ENCODE measurements at regions of chr6 and their contacts with region 1.

Region 1: DNA sequence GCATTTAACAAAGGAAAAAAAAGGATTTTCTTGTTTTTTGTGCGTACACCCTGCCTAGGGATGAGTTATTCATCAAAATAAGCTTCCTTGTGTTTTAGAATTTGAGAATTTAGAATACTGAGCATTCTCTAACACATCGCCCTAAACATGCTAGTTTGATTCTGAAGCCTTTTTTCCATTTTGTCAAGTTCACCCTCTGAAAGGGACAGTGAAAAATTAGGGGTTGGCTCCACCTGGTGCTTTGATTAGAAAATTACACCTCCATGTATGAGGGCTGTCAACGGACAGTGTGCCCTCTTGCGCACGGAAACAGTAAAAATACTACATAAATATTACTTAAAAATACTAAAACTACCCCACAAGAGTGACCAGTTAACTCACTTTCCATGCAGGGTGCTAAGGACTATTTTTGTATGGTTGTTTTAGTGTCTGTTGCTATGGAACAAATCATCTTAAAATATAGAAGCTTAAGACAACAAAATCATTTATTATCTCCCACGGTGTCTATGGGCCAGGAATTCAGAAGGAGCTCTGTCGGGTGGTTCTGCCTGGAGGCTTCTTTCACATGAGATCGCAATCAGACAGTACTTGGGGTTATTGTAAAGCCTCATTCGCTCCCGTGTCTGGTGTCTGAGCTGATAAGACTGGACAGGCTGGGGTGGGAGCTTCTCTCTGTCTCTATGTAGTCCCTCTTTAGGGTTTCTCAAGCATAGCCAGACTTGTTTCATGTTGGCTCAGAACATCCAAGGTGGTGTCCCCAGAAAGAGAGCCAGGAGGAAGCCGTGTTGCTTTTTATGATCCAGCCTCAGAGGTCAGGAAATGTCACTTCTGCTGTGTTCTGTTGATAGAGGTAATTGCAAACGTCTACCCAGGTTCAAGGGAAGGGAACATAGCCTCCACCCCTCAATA is 41.1 kb upstream of the TMEM170B start:
- DNase-seq: peak; percentile 88
- ATAC-seq: peak; percentile 88
- H3K4me3 ChIP-seq: no peak overlapping the region
- H3K4me3 Mint-ChIP-seq: peak overlapping the region; percentile 40
- H3K27ac ChIP-seq: peak overlapping the region in 1 of 2 donors; percentile 57
- H3K27ac Mint-ChIP-seq: peak overlapping the region; percentile 64
- H3K4me1 ChIP-seq: peaks cover 48 to 52% of the 10 kb centered on the region in 2 donors
- H3K4me1 Mint-ChIP-seq: peaks cover 32% of the 10 kb centered on the region
- H3K27me3 ChIP-seq: no peaks in the 10 kb centered on the region
- H3K27me3 Mint-ChIP-seq: no peaks in the 10 kb centered on the region
- CTCF ChIP-seq: peak; percentile 98

Region 2: GRCh38 chr6:11144393-11144851 is 352.0 kb before region 1 on chr6:
- CTCF ChIA-PET with region 1: interaction called, 156 read pairs
- POLR2A ChIA-PET with region 1: interaction called, 3 read pairs
- intact Hi-C with region 1: loop called (anchors 1 kb)
- DNase-seq: peak; percentile 77
- ATAC-seq: peak; percentile 80
- H3K4me3 ChIP-seq: no peak overlapping the region
- H3K4me3 Mint-ChIP-seq: no peak overlapping the region
- H3K27ac ChIP-seq: no peak overlapping the region
- H3K27ac Mint-ChIP-seq: no peak overlapping the region
- H3K4me1 ChIP-seq: peaks cover 0 to 5% of the 10 kb centered on the region in 2 donors
- H3K4me1 Mint-ChIP-seq: peaks cover 7% of the 10 kb centered on the region
- H3K27me3 ChIP-seq: no peaks in the 10 kb centered on the region
- H3K27me3 Mint-ChIP-seq: no peaks in the 10 kb centered on the region
- CTCF ChIP-seq: peak; percentile 94

Region 3: GRCh38 chr6:11198663-11199603 is 297.5 kb before region 1 on chr6:
- CTCF ChIA-PET with region 1: interaction called, 11 read pairs
- POLR2A ChIA-PET with region 1: no interaction called
- intact Hi-C with region 1: no loop called
- DNase-seq: peak; percentile 32
- ATAC-seq: no peak
- H3K4me3 ChIP-seq: no peak overlapping the region
- H3K4me3 Mint-ChIP-seq: no peak overlapping the region
- H3K27ac ChIP-seq: peak overlapping the region; percentile 11 to 69
- H3K27ac Mint-ChIP-seq: peak overlapping the region; percentile 78
- H3K4me1 ChIP-seq: peaks cover 0 to 8% of the 10 kb centered on the region in 2 donors
- H3K4me1 Mint-ChIP-seq: peaks cover 21% of the 10 kb centered on the region
- H3K27me3 ChIP-seq: no peaks in the 10 kb centered on the region
- H3K27me3 Mint-ChIP-seq: no peaks in the 10 kb centered on the region
- CTCF ChIP-seq: no peak

Region 4: GRCh38 chr6:11330413-11330760 is 166.0 kb before region 1 on chr6:
- CTCF ChIA-PET with region 1: interaction called, 19 read pairs
- POLR2A ChIA-PET with region 1: no interaction called
- intact Hi-C with region 1: loop called (anchors 5 kb)
- DNase-seq: no peak
- ATAC-seq: no peak
- H3K4me3 ChIP-seq: no peak overlapping the region
- H3K4me3 Mint-ChIP-seq: peak overlapping the region; percentile 38
- H3K27ac ChIP-seq: peak overlapping the region; percentile 33 to 78
- H3K27ac Mint-ChIP-seq: peak overlapping the region; percentile 76
- H3K4me1 ChIP-seq: peaks cover 53 to 54% of the 10 kb centered on the region in 2 donors
- H3K4me1 Mint-ChIP-seq: peaks cover 71% of the 10 kb centered on the region
- H3K27me3 ChIP-seq: no peaks in the 10 kb centered on the region
- H3K27me3 Mint-ChIP-seq: no peaks in the 10 kb centered on the region
- CTCF ChIP-seq: no peak

Region 5: DNA sequence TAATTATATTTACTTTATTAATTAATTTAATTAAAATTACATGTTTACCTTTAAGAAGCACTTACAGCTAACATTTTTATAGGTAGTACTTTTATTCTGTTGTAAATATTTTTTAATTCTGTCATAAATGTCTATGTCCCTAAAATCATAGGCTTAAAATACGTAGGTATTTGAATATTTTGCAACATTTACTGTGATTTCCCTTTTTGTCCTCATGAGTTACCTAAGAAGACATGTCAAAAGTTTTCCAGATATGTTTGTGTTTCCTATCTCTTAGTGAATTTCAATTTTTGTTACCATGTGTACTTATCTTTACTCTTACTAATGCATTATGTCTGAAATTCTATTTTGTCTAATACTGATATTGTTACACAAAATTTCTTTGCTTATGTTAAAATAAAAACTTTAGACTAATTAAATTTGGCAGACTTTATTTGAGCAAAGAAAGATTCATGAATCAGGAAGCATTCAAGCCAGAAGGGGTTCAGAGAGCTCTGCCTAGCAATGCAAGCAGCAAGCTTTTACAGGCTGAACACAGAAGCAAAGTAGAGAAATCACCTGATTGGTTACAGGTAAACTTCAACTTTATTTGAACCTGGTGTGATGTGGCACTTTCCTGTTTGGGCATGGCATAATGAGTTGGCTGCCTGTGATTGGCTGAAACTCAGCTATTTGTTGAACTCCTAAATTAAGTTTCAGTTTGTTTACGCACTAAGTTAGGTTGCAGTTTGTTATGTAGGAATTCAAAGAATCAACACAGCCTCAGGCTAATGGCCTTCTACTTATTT is 82.0 kb before region 1 on chr6:
- CTCF ChIA-PET with region 1: interaction called, 15 read pairs
- POLR2A ChIA-PET with region 1: no interaction called
- intact Hi-C with region 1: no loop called
- DNase-seq: peak; percentile 46
- ATAC-seq: peak; percentile 64
- H3K4me3 ChIP-seq: peak overlapping the region in 1 of 5 experiments; percentile 3
- H3K4me3 Mint-ChIP-seq: peak overlapping the region; percentile 39
- H3K27ac ChIP-seq: no peak overlapping the region
- H3K27ac Mint-ChIP-seq: peak overlapping the region; percentile 37
- H3K4me1 ChIP-seq: peaks cover 19 to 30% of the 10 kb centered on the region in 2 donors
- H3K4me1 Mint-ChIP-seq: peaks cover 33% of the 10 kb centered on the region
- H3K27me3 ChIP-seq: no peaks in the 10 kb centered on the region
- H3K27me3 Mint-ChIP-seq: no peaks in the 10 kb centered on the region
- CTCF ChIP-seq: no peak

Region 6: DNA sequence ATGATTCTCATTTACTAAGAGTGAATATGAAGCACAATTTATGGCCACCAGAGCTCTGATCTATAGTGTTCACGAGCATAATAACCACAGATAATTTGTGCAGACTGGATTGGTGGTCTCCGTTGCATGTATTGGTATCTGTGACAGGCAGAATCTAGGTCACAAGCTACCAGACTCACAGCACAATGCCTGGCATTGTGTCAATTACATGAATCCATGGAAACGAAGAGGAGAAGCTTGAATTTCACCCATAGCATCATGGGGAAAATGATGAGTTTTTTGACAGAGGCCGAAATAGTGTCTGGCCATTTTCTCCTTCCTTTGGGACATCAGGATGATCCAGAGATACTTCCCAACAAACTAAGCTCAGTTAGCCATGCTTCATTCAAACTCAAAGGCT is 11.1 kb before region 1 on chr6:
- CTCF ChIA-PET with region 1: interaction called, 11 read pairs
- POLR2A ChIA-PET with region 1: no interaction called
- intact Hi-C with region 1: no loop called
- DNase-seq: no peak
- ATAC-seq: no peak
- H3K4me3 ChIP-seq: no peak overlapping the region
- H3K4me3 Mint-ChIP-seq: no peak overlapping the region
- H3K27ac ChIP-seq: no peak overlapping the region
- H3K27ac Mint-ChIP-seq: no peak overlapping the region
- H3K4me1 ChIP-seq: no peaks in the 10 kb centered on the region
- H3K4me1 Mint-ChIP-seq: no peaks in the 10 kb centered on the region
- H3K27me3 ChIP-seq: no peaks in the 10 kb centered on the region
- H3K27me3 Mint-ChIP-seq: no peaks in the 10 kb centered on the region
- CTCF ChIP-seq: no peak

Region 7: DNA sequence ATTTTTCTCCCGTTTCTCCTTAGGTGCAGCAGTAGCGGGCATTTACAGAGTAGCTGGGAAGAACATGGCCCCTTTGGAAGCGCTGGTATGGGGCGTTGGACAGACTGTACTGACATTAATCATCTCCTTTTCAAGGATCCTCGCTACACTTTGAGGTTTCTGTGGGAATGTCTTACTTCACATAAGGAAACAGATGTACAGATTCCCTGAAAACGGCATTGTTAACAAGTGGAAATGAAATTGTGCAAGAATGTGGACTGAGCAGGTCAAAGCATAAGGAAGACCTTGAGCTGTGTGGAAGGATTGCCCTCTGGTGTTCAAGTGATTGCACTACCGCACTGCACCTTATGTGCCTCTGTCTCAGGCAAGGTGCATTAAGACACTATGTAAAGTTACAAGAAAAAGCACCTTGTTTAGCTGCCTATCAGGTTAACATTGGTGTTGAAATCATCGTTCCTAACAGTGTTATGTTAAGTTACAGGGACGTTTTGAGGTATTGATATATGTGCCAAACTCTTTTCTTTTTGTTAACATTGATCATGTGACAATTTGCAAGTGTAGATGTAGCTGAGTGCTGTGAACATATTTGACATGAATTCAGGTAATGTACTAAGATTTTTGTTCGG is 79.1 kb after region 1 on chr6:
- CTCF ChIA-PET with region 1: interaction called, 30 read pairs
- POLR2A ChIA-PET with region 1: no interaction called
- intact Hi-C with region 1: loop called (anchors 1 kb)
- DNase-seq: peak; percentile 74
- ATAC-seq: peak; percentile 85
- H3K4me3 ChIP-seq: no peak overlapping the region
- H3K4me3 Mint-ChIP-seq: no peak overlapping the region
- H3K27ac ChIP-seq: no peak overlapping the region
- H3K27ac Mint-ChIP-seq: no peak overlapping the region
- H3K4me1 ChIP-seq: no peaks in the 10 kb centered on the region
- H3K4me1 Mint-ChIP-seq: peaks cover 3% of the 10 kb centered on the region
- H3K27me3 ChIP-seq: no peaks in the 10 kb centered on the region
- H3K27me3 Mint-ChIP-seq: no peaks in the 10 kb centered on the region
- CTCF ChIP-seq: peak; percentile 93

Region 8: GRCh38 chr6:11711003-11711983 is 214.9 kb after region 1 on chr6:
- CTCF ChIA-PET with region 1: no interaction called
- POLR2A ChIA-PET with region 1: no interaction called
- intact Hi-C with region 1: no loop called
- DNase-seq: no peak
- ATAC-seq: no peak
- H3K4me3 ChIP-seq: no peak overlapping the region
- H3K4me3 Mint-ChIP-seq: no peak overlapping the region
- H3K27ac ChIP-seq: no peak overlapping the region
- H3K27ac Mint-ChIP-seq: no peak overlapping the region
- H3K4me1 ChIP-seq: peaks cover 8 to 21% of the 10 kb centered on the region in 2 donors
- H3K4me1 Mint-ChIP-seq: peaks cover 31% of the 10 kb centered on the region
- H3K27me3 ChIP-seq: no peaks in the 10 kb centered on the region
- H3K27me3 Mint-ChIP-seq: no peaks in the 10 kb centered on the region
- CTCF ChIP-seq: no peak

Region 9: GRCh38 chr6:11815231-11815630 is 318.8 kb after region 1 on chr6:
- CTCF ChIA-PET with region 1: no interaction called
- POLR2A ChIA-PET with region 1: no interaction called
- intact Hi-C with region 1: no loop called
- DNase-seq: no peak
- ATAC-seq: no peak
- H3K4me3 ChIP-seq: no peak overlapping the region
- H3K4me3 Mint-ChIP-seq: no peak overlapping the region
- H3K27ac ChIP-seq: no peak overlapping the region
- H3K27ac Mint-ChIP-seq: no peak overlapping the region
- H3K4me1 ChIP-seq: no peaks in the 10 kb centered on the region
- H3K4me1 Mint-ChIP-seq: no peaks in the 10 kb centered on the region
- H3K27me3 ChIP-seq: no peaks in the 10 kb centered on the region
- H3K27me3 Mint-ChIP-seq: peaks cover 3% of the 10 kb centered on the region
- CTCF ChIP-seq: no peak

Region 10: GRCh38 chr6:12923644-12924235 is 1427.3 kb after region 1 on chr6:
- CTCF ChIA-PET with region 1: no interaction called
- POLR2A ChIA-PET with region 1: no interaction called
- intact Hi-C with region 1: no loop called
- DNase-seq: no peak
- ATAC-seq: no peak
- H3K4me3 ChIP-seq: no peak overlapping the region
- H3K4me3 Mint-ChIP-seq: no peak overlapping the region
- H3K27ac ChIP-seq: no peak overlapping the region
- H3K27ac Mint-ChIP-seq: no peak overlapping the region
- H3K4me1 ChIP-seq: no peaks in the 10 kb centered on the region
- H3K4me1 Mint-ChIP-seq: no peaks in the 10 kb centered on the region
- H3K27me3 ChIP-seq: no peaks in the 10 kb centered on the region
- H3K27me3 Mint-ChIP-seq: peaks cover 23% of the 10 kb centered on the region
- CTCF ChIP-seq: no peak